K562 (cell line): ENCODE measurements at regions of chr3 and their contacts with region 1.

Region 1: GRCh38 chr3:172673210-172673679 is 37.6 kb downstream of the NCEH1 start:
- DNase-seq: peak; percentile 28 to 85 (median 50)
- ATAC-seq: peak; percentile 98
- H3K4me3 ChIP-seq: no peak overlapping the region
- H3K27ac ChIP-seq: no peak overlapping the region
- H3K4me1 ChIP-seq: no peaks in the 10 kb centered on the region
- H3K27me3 ChIP-seq: no peaks in the 10 kb centered on the region
- CTCF ChIP-seq: peak; percentile 81 to 85 (median 82)
- EP300 ChIP-seq: no peak
- POLR2A ChIP-seq: no peak
- RAD21 ChIP-seq: peak; percentile 67 to 82

Region 2: GRCh38 chr3:171269542-171269941 is 1403.7 kb before region 1 on chr3:
- CTCF ChIA-PET with region 1: no interaction called
- POLR2A ChIA-PET with region 1: no interaction called
- in situ Hi-C with region 1: no loop called
- intact Hi-C with region 1: no loop called
- DNase-seq: no peak
- ATAC-seq: no peak
- H3K4me3 ChIP-seq: no peak overlapping the region
- H3K27ac ChIP-seq: no peak overlapping the region
- H3K4me1 ChIP-seq: no peaks in the 10 kb centered on the region; a peak in 2 of 5 replicates
- H3K27me3 ChIP-seq: no peaks in the 10 kb centered on the region
- CTCF ChIP-seq: no peak
- EP300 ChIP-seq: no peak
- POLR2A ChIP-seq: no peak
- RAD21 ChIP-seq: no peak

Region 3: GRCh38 chr3:172305552-172305951 is 367.7 kb before region 1 on chr3:
- CTCF ChIA-PET with region 1: no interaction called
- POLR2A ChIA-PET with region 1: no interaction called
- in situ Hi-C with region 1: no loop called
- intact Hi-C with region 1: no loop called
- DNase-seq: no peak
- ATAC-seq: no peak
- H3K4me3 ChIP-seq: no peak overlapping the region
- H3K27ac ChIP-seq: no peak overlapping the region
- H3K4me1 ChIP-seq: peaks cover 5 to 20% of the 10 kb centered on the region in 2 experiments; a peak in 4 of 5 replicates
- H3K27me3 ChIP-seq: no peaks in the 10 kb centered on the region
- CTCF ChIP-seq: no peak
- EP300 ChIP-seq: no peak
- POLR2A ChIP-seq: no peak
- RAD21 ChIP-seq: no peak

Region 4: GRCh38 chr3:172635588-172635987 is 37.7 kb before region 1 on chr3:
- CTCF ChIA-PET with region 1: no interaction called
- POLR2A ChIA-PET with region 1: no interaction called
- in situ Hi-C with region 1: no loop called
- intact Hi-C with region 1: no loop called
- DNase-seq: no peak
- ATAC-seq: peak; percentile 43; the same call in 2 of the 3 replicates
- H3K4me3 ChIP-seq: no peak overlapping the region
- H3K27ac ChIP-seq: no peak overlapping the region
- H3K4me1 ChIP-seq: no peaks in the 10 kb centered on the region
- H3K27me3 ChIP-seq: no peaks in the 10 kb centered on the region
- CTCF ChIP-seq: no peak
- EP300 ChIP-seq: no peak
- POLR2A ChIP-seq: no peak
- RAD21 ChIP-seq: peak in 1 of 2 experiments; percentile 33; a peak in 1 of 4 replicates

Region 5: DNA sequence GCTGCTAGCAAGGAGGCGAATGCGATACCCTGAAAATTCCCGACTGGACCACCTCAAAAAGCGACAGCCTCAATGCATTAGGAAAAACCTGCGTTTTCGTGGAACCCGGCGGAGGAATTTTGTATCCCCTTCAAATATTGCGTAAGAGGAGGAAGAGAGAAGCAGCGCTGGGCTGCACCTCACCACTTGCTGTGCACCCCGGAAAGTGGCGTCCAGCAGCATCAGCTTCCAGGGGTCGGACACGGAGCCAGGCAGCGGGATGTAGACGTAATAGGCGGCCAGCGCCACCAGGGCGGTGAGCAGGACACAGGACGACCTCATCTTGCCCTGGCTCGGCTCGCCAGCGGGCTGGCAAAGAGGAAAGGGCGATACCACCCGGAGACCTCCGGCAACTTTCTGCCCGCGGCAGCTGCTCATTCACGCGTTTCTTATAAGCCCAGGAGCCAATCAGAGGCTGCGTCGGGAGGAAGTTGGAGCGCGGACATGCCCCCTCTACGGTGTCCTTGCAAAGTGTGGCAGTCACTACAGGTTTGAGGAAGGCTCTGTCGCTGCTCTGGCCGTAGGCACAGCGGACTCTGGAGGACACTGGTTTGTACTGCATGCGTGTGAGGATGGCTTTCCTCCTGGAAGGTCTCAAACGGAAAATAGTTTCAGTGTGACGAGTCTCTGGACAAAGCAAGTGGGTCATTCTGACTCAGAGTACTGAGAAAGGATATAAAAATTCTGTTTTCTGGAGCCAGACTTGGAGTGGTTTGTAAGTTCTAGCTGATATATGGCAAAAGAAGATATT is 37.6 kb after region 1 on chr3 and contains the start of gene NCEH1:
- CTCF ChIA-PET with region 1: interaction called, 4 read pairs
- POLR2A ChIA-PET with region 1: no interaction called
- in situ Hi-C with region 1: no loop called
- intact Hi-C with region 1: loop called (anchors 1 kb)
- DNase-seq: peak; percentile 83 to 96 (median 88)
- ATAC-seq: peak; percentile 99
- H3K4me3 ChIP-seq: peak within 1 kb of the TSS; percentile 62
- H3K27ac ChIP-seq: peak within 1 kb of the TSS; percentile 40; the same call in 2 of the 3 replicates
- H3K4me1 ChIP-seq: peaks cover 4 to 10% of the 10 kb centered on the region in 2 experiments; a peak in 3 of 5 replicates
- H3K27me3 ChIP-seq: no peaks in the 10 kb centered on the region
- CTCF ChIP-seq: peak; percentile 95 to 96 (median 96)
- EP300 ChIP-seq: no peak; the same call in 1 of the 2 replicates
- POLR2A ChIP-seq: peak; percentile 84
- RAD21 ChIP-seq: peak; percentile 61 to 82
- polyA plus RNA-seq, gene NCEH1: 1.3 to 3.0 TPM

Region 6: DNA sequence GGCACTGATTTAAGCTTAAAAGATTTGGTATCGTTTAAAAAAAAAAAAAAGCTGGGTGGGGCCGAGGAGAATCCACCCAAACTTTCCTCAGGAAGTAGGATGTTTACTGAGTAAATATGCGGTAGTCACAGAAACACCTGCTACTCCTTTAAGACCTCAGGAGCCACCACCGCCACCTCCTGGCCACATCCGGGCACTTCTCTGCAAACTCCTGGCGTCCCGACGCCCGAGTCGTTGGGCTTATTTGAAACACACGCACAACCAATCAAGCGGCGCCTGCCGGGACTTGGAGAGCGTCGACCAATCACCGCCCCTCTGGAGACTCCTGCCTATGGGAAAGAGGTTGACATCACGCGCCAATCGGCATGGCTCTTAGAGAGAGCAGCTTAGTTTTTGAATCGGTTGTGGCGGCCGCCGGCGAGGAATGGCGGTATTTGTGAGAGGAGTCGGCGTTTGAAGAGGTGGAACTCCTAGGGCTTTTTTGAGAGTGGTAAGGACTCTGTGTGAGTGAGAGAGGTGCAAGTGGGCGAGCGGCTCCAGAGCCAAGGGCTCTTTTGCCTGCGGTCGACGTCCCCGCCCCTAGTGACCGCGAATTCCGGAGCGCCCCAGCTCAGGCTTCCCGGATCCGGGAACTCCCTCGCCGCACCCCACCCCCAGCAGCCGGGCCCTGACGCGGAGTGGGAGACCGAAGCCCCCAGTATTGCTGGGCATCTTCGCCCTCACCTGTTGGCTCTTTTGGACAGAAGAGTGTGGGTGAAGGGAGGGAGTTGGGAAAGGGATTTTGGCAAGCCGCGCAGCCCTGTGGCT is 77.3 kb after region 1 on chr3 and contains the start of gene ECT2:
- CTCF ChIA-PET with region 1: no interaction called
- POLR2A ChIA-PET with region 1: no interaction called
- in situ Hi-C with region 1: no loop called
- intact Hi-C with region 1: loop called (anchors 1 kb)
- DNase-seq: peak; percentile 98 to 100 (median 98)
- ATAC-seq: peak; percentile 99
- H3K4me3 ChIP-seq: peak within 1 kb of the TSS; percentile 80
- H3K27ac ChIP-seq: peak within 1 kb of the TSS; percentile 88
- H3K4me1 ChIP-seq: peaks cover 0 to 2% of the 10 kb centered on the region in 2 experiments; a peak in 2 of 5 replicates
- H3K27me3 ChIP-seq: no peaks in the 10 kb centered on the region
- CTCF ChIP-seq: peak; percentile 76 to 87 (median 81)
- EP300 ChIP-seq: 0 out of 2 replicates have a peak, but pooled peaks have one; percentile 36
- POLR2A ChIP-seq: peak; percentile 95
- RAD21 ChIP-seq: peak; percentile 40 to 47
- polyA plus RNA-seq, gene ECT2: 19.0 to 33.6 TPM

Region 7: DNA sequence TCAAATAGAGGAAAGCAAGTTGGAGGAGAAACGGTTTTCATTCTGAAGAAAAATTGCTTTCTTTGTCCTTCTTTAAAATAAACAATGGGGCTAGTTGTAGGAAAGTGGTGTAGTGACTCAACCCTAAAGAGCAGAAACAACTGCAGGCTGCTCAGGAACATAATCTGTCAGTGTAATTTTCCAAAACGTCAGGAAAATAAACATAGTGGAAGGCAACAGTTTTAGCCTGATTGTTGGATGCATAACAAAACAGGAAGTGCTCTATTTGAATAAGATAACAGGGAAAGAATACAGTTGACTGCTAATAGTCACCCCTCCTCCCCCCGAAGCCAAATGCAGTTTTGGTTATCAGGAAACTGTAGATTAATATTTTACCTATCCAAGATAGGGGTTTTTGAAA is 244.9 kb after region 1 on chr3:
- CTCF ChIA-PET with region 1: no interaction called
- POLR2A ChIA-PET with region 1: no interaction called
- in situ Hi-C with region 1: no loop called
- intact Hi-C with region 1: loop called (anchors 10 kb)
- DNase-seq: peak in 1 of 4 experiments; percentile 13
- ATAC-seq: peak; percentile 42
- H3K4me3 ChIP-seq: no peak overlapping the region
- H3K27ac ChIP-seq: peak overlapping the region; percentile 54; the same call in 1 of the 3 replicates
- H3K4me1 ChIP-seq: peaks cover 0 to 19% of the 10 kb centered on the region in 2 experiments; a peak in 3 of 5 replicates
- H3K27me3 ChIP-seq: no peaks in the 10 kb centered on the region
- CTCF ChIP-seq: no peak
- EP300 ChIP-seq: no peak
- POLR2A ChIP-seq: no peak
- RAD21 ChIP-seq: no peak